ENCODE measurements at regions of chr10 and their contacts with region 1.

Region 1: DNA sequence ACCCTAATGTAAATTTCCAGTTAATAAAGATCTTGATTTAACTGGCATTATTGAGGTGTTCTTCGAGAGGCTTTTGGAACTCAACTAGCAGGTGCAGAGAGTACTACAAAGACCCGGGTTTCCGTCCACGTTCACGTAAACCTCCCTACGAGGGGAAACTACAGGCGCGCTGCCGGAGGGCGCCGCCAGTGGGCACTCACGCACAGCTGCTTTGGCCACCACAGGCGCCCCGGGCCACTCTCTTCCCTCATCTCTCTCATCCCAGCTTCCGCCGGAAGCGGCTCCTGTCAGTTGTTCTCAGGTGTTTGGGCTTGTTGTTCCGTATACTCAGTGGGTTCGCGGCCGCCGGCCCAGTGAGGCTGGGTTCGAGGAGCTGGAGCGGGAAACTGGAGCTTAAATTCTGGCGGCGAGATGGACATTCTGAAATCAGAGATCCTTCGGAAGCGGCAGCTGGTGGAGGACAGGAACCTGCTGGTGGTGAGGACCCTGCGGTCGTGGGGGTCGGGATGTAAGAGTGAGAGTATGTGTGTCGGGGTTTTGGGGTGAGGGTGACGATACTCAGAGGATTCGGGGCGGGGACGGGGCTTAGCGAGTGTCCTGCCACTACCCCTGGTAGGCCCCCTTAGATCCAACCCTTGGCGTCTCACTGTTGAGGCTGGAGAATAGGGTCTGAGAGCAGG is at the start of gene PRPF18:
- DNase-seq: peak; percentile 89
- H3K4me3 ChIP-seq: peak within 1 kb of the TSS; percentile 94 to 96 (median 94)
- H3K27ac ChIP-seq: peak within 1 kb of the TSS; percentile 73
- H3K4me1 ChIP-seq: peaks cover 4% of the 10 kb centered on the region
- H3K27me3 ChIP-seq: no peaks in the 10 kb centered on the region
- CTCF ChIP-seq: peak; percentile 92 to 97
- total RNA-seq, gene PRPF18: 22.4 to 23.0 TPM

Region 2: GRCh38 chr10:13404305-13404759 is 182.5 kb before region 1 on chr10:
- CTCF ChIA-PET with region 1: no interaction called
- dilution Hi-C with region 1: no loop called
- in situ Hi-C with region 1: no loop called
- intact Hi-C with region 1: loop called (anchors 1 kb)
- DNase-seq: no peak
- H3K4me3 ChIP-seq: no peak overlapping the region
- H3K27ac ChIP-seq: no peak overlapping the region
- H3K4me1 ChIP-seq: no peaks in the 10 kb centered on the region
- H3K27me3 ChIP-seq: no peaks in the 10 kb centered on the region
- CTCF ChIP-seq: no peak

Region 3: DNA sequence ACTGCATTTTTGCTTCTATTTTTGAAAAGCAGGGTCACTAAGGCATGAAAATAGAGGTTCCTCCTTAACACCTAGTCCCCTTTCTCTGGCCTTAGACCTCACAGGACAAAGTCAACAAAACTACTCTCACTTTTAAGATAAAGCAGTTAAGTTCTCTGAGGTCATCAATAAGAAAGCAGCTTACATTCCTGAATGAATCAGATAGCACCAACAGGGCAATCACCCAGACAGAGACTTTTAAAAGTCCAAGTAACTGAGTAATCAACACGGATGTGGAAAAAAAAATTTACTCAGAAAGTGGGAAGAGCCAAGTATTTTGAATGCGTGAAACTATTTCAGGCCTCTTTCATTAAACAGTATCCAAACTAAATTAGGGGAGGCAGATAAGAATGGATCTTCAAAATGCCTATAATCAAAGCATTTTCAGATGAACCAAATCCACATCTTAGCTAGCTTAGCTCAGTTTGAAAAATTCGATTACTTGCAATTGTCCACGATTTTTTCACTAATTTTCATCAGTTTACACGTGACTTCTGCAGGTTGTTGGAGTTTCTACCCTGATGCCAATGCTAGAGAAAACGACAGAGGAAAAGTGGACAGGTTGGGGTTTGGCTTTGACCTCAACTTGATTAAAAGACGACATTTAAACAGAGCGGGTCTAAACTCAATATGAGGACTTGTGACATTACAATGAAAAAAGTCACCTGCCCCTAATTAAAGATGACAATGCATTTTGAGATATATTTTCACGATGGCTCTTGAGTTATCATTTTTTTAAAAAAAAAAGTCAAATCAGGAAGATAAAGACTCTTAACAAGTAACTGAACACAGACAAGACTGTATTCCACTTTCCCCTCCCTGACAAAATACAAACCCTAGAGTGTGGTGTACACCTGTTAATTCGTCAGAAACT is 59.6 kb before region 1 on chr10:
- CTCF ChIA-PET with region 1: no interaction called
- dilution Hi-C with region 1: no loop called
- in situ Hi-C with region 1: no loop called
- intact Hi-C with region 1: loop called (anchors 1 kb)
- DNase-seq: peak; percentile 63
- H3K4me3 ChIP-seq: peak overlapping the region; percentile 41 to 58 (median 45)
- H3K27ac ChIP-seq: no peak overlapping the region
- H3K4me1 ChIP-seq: peaks cover 21% of the 10 kb centered on the region
- H3K27me3 ChIP-seq: no peaks in the 10 kb centered on the region
- CTCF ChIP-seq: no peak

Measured in mammary epithelial cell (primary cell).